MCF 10A (cell line): ENCODE measurements at regions of chr5 and their contacts with region 1.

Region 1: GRCh38 chr5:115847290-115847689 is 5.6 kb downstream of the AP3S1 start:
- DNase-seq: peak; percentile 86
- H3K4me3 Mint-ChIP-seq: no peak overlapping the region
- H3K27ac Mint-ChIP-seq: peak overlapping the region; percentile 79
- H3K4me1 Mint-ChIP-seq: peaks cover 39% of the 10 kb centered on the region
- H3K27me3 Mint-ChIP-seq: no peaks in the 10 kb centered on the region
- CTCF ChIP-seq: no peak

Region 2: DNA sequence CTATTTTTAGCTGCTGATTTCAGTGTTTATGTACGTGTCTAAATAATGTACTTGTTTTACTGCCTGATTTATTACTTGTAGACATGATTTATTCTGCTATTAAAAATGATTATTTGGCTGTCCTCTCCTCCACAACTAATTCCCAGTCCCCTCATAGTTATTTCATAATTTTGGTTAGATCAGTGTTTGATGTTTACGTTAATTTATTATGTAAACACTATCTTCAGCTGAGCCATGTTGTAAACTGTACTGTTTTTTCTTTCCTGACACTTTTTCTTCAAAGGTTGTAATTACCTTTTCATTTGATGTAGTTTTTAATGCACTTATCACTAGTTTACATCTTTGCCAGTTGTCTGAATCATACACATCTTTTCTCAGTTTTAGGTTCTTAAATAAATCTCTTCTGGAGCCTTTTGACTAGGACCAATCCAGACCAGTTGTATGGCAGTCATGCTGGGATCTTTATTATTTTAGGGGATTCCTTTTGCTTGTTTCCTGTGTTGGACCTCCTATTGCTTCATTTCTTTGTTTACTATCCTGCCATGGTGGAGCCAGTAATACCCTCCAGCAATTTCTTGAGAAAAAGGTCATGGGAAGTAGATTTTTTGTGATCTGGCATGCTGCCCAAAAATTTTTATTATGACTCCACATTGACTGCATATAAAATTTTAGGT is 10.5 kb after region 1 on chr5:
- CTCF ChIA-PET with region 1: interaction called, 3 read pairs
- POLR2A ChIA-PET with region 1: interaction called, 23 read pairs
- intact Hi-C with region 1: no loop called
- DNase-seq: peak; percentile 93
- H3K4me3 Mint-ChIP-seq: no peak overlapping the region
- H3K27ac Mint-ChIP-seq: peak overlapping the region; percentile 89
- H3K4me1 Mint-ChIP-seq: peaks cover 38% of the 10 kb centered on the region
- H3K27me3 Mint-ChIP-seq: no peaks in the 10 kb centered on the region
- CTCF ChIP-seq: no peak